H1 (cell line): ENCODE measurements at regions of chr10 and their contacts with region 1.

Region 1: GRCh38 chr10:73920089-73920488 is 9.2 kb downstream of the PLAU start:
- DNase-seq: no peak
- H3K4me3 ChIP-seq: no peak overlapping the region
- H3K27ac ChIP-seq: peak overlapping the region; percentile 34; the same call in 1 of the 2 replicates
- H3K4me1 ChIP-seq: peaks cover 3 to 10% (median 4%) of the 10 kb centered on the region in 4 experiments
- H3K27me3 ChIP-seq: no peaks in the 10 kb centered on the region
- CTCF ChIP-seq: no peak
- EP300 ChIP-seq: no peak
- POLR2A ChIP-seq: no peak
- RAD21 ChIP-seq: no peak

Region 2: GRCh38 chr10:73816917-73817729 is 103.0 kb before region 1 on chr10:
- CTCF ChIA-PET with region 1: no interaction called
- POLR2A ChIA-PET with region 1: no interaction called
- DNase-seq: no peak
- H3K4me3 ChIP-seq: no peak overlapping the region
- H3K27ac ChIP-seq: no peak overlapping the region
- H3K4me1 ChIP-seq: no peaks in the 10 kb centered on the region; a peak in 1 of 7 replicates
- H3K27me3 ChIP-seq: no peaks in the 10 kb centered on the region; a peak in 1 of 7 replicates
- CTCF ChIP-seq: no peak
- EP300 ChIP-seq: no peak
- POLR2A ChIP-seq: no peak
- RAD21 ChIP-seq: no peak

Region 3: GRCh38 chr10:73837072-73837471 is 83.0 kb before region 1 on chr10:
- CTCF ChIA-PET with region 1: no interaction called
- POLR2A ChIA-PET with region 1: no interaction called
- DNase-seq: no peak
- H3K4me3 ChIP-seq: no peak overlapping the region
- H3K27ac ChIP-seq: no peak overlapping the region
- H3K4me1 ChIP-seq: no peaks in the 10 kb centered on the region
- H3K27me3 ChIP-seq: no peaks in the 10 kb centered on the region
- CTCF ChIP-seq: no peak
- EP300 ChIP-seq: no peak
- POLR2A ChIP-seq: no peak
- RAD21 ChIP-seq: no peak

Region 4: DNA sequence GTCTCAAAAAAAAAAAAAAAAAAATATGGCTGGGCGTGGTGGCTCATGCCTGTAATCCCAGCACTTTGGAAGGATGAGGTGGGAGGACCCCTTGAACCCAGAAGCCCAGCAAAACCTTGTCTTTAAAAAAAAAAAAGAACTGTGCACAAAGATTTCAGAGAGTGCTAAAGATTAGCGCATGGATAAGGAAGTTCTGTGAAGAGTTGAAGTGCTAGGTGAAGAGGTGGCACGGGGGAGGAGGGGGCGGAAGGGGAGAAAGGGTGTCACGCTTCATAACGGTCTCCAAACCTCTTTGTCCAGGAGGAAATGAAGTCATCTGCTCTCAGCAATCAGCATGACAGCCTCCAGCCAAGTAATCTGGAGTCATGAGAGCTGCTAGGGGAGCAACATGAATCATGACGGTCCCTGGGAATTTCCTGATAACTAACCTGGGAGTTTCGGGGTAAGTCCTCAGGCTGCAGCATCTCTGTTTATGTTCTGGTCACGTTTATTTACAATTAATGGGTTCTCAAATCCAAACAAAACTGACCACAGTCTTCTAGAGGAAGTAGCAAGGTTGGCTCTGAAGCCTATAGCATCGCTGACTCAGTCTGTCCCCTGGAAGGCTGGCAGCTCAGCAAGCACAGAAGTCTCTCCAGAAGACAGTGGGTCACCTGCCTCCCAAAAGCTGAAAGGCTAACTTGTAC is 11.1 kb before region 1 on chr10:
- CTCF ChIA-PET with region 1: interaction called, 3 read pairs
- POLR2A ChIA-PET with region 1: interaction called, 11 read pairs
- DNase-seq: no peak
- H3K4me3 ChIP-seq: no peak overlapping the region
- H3K27ac ChIP-seq: no peak overlapping the region
- H3K4me1 ChIP-seq: peaks cover 15 to 30% (median 24%) of the 10 kb centered on the region in 4 experiments
- H3K27me3 ChIP-seq: peaks cover 3 to 19% (median 12%) of the 10 kb centered on the region in 4 experiments; a peak in 6 of 7 replicates
- CTCF ChIP-seq: no peak
- EP300 ChIP-seq: no peak
- POLR2A ChIP-seq: no peak
- RAD21 ChIP-seq: no peak